Psoas muscle (tissue), 8 donors: ENCODE measurements at regions of chr14 and their contacts with region 1.

Region 1: DNA sequence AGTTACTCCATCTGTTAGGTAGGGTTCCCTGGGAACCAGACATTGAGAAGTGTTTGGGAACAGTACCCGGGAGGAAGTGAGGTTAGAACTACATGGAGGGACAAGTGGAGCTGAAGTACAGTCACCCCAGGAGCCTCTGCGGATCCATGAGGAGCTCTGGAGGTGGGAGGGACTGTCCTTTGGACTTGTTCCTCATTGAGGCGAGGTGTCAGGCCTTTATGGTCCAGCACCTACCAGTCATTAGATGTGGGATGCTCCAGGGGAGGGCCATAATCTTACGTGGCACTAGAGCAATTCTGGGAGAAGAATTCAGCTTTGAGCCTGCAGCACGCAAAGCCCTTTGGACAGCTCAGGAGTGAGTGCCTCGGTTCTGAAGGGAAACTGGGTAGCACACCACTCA is 142.8 kb downstream of the DACT1 start:
- DNase-seq: no peak
- ATAC-seq: no peak
- H3K4me3 ChIP-seq: no peak overlapping the region
- H3K27ac ChIP-seq: no peak overlapping the region
- H3K4me1 ChIP-seq: no peaks in the 10 kb centered on the region
- H3K27me3 ChIP-seq: peaks cover 0 to 1% (median 0%) of the 10 kb centered on the region in 3 donors
- CTCF ChIP-seq: no peak

Region 2: GRCh38 chr14:58846682-58847465 is 66.3 kb after region 1 on chr14:
- intact Hi-C with region 1: loop called in 1 of 2 experiments (anchors 2 kb)
- DNase-seq: no peak
- ATAC-seq: no peak
- H3K4me3 ChIP-seq: no peak overlapping the region
- H3K27ac ChIP-seq: no peak overlapping the region
- H3K4me1 ChIP-seq: no peaks in the 10 kb centered on the region
- H3K27me3 ChIP-seq: no peaks in the 10 kb centered on the region
- CTCF ChIP-seq: no peak